Left lung (tissue), 14 donors: ENCODE measurements at regions of chr2 and their contacts with region 1.

Region 1: DNA sequence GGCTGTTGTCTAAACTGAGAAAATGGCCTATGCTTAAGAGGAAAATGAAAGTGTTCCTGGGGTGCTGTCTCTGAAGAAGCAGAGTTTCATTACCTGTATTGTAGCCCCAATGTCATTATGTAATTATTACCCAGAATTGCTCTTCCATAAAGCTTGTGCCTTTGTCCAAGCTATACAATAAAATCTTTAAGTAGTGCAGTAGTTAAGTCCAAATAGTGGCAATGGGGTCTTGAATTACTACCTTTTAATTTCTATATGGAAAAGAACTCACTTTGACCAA is 13.8 kb upstream of the ALLC start:
- DNase-seq: no peak
- ATAC-seq: no peak
- H3K4me3 ChIP-seq: no peak overlapping the region
- H3K27ac ChIP-seq: no peak overlapping the region
- H3K4me1 ChIP-seq: no peaks in the 10 kb centered on the region
- H3K27me3 ChIP-seq: no peaks in the 10 kb centered on the region
- CTCF ChIP-seq: no peak

Region 2: DNA sequence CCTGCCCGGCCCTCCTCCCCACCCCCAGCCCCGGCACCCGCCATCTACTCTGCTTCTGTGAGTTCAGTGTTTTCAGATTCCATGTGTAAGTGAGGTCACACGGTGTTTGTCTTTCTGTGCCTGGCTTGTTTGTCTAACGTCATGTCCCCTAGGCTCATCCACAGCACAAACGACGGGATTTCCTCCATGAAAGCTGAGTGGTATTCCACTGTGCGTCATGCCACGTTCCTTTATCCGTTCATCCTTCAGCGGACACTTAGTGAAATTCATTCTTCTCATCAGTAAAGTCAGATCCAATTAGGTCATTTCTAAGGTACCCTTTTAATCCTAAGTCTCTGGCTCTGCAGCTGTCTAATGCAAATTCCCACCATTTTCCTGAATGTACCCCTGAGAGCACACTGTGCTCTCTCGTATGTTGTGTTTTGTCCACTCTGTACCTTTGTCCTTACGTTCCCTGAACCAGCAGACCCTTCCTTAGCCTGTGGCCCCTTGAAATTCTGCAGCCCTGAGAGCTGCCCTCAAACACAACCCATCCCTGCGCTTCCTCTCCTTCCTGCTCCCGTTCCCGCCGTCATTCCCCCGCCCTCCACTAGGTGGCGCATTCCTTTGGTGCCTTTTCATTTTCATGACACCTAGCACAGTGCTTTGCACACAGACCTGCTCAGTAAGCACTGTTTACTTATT is 220.6 kb before region 1 on chr2:
- intact Hi-C with region 1: loop called in 1 of 2 experiments (anchors 10 kb)
- DNase-seq: peak in 3 of 4 donors; percentile 34 to 90 (median 55)
- ATAC-seq: peak; percentile 83
- H3K4me3 ChIP-seq: no peak overlapping the region
- H3K27ac ChIP-seq: no peak overlapping the region
- H3K4me1 ChIP-seq: no peaks in the 10 kb centered on the region
- H3K27me3 ChIP-seq: no peaks in the 10 kb centered on the region
- CTCF ChIP-seq: peak; percentile 94 to 95

Region 3: DNA sequence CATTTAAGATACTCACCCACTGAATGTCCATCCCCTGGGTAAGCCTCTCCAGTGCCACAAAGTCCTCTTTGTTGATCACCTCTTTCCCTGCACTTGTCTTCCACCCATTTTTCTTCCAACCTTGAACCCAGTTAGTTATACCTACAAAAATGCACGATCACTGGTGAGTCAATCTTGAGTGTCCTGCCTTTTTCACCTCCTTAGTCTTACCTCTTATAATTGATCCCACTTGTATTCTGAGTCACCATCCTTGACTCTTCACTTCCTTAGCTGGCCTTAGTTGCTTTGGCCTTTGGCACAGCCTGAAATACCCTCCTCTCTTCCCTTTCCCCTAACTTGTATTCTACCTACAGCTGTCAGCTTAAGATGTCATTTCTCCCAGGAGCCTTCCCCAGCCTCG is 96.3 kb before region 1 on chr2:
- intact Hi-C with region 1: no loop called
- DNase-seq: no peak
- ATAC-seq: no peak
- H3K4me3 ChIP-seq: no peak overlapping the region
- H3K27ac ChIP-seq: no peak overlapping the region
- H3K4me1 ChIP-seq: no peaks in the 10 kb centered on the region
- H3K27me3 ChIP-seq: no peaks in the 10 kb centered on the region
- CTCF ChIP-seq: no peak